ENCODE measurements at regions of chr16 and their contacts with region 1.

Region 1: DNA sequence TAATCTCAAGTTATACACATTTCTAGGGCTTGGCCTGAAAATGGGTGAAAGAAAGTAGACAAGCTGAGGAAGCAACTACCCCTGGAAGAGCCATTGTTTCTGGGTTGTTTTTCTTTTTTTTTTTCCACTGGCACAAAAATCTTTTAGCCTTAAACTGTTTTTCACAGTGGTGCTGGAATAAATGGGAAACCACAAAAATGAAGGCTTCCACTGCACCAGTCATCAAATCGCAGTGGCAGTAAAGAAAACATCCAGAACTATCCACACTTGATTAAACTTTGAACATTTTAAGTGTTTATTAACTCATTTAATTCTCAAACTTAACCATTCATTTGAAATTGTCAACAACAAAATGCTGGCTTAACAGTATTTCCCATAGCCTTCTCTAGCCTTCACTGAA is 14.3 kb downstream of the CMTM4 start:
- DNase-seq: no peak

Region 2: GRCh38 chr16:66660422-66661209 is 21.7 kb before region 1 on chr16:
- CTCF ChIA-PET with region 1: no interaction called
- POLR2A ChIA-PET with region 1: no interaction called
- DNase-seq: peak; percentile 67

Region 3: GRCh38 chr16:66696669-66697630 is 14.7 kb after region 1 on chr16 and contains the start of gene CMTM4:
- CTCF ChIA-PET with region 1: no interaction called
- POLR2A ChIA-PET with region 1: interaction called, 12 read pairs
- DNase-seq: peak; percentile 94

Region 4: GRCh38 chr16:66758086-66758485 is 75.8 kb after region 1 on chr16:
- CTCF ChIA-PET with region 1: no interaction called
- POLR2A ChIA-PET with region 1: no interaction called
- DNase-seq: no peak

Measured in HEK293T (cell line).